Aorta (tissue), 5 donors: ENCODE measurements at regions of chr14 and their contacts with region 1.

Region 1: GRCh38 chr14:74793506-74794168 is 30.5 kb downstream of the YLPM1 start:
- DNase-seq: no peak
- ATAC-seq: no peak
- H3K4me3 ChIP-seq: no peak overlapping the region
- H3K27ac ChIP-seq: peak overlapping the region in 1 of 2 donors; percentile 76
- H3K4me1 ChIP-seq: peaks cover 0 to 2% of the 10 kb centered on the region in 2 donors
- H3K27me3 ChIP-seq: no peaks in the 10 kb centered on the region

Region 2: GRCh38 chr14:74493343-74494261 is 300.0 kb before region 1 on chr14 and contains the start of gene ISCA2:
- intact Hi-C with region 1: loop called in 1 of 2 experiments (anchors 10 kb)
- DNase-seq: peak; percentile 100
- ATAC-seq: peak; percentile 98
- H3K4me3 ChIP-seq: peak within 1 kb of the TSS; percentile 62 to 88
- H3K27ac ChIP-seq: peak within 1 kb of the TSS in 1 of 2 donors; percentile 69
- H3K4me1 ChIP-seq: peaks cover 4 to 5% of the 10 kb centered on the region in 2 donors
- H3K27me3 ChIP-seq: no peaks in the 10 kb centered on the region
- total RNA-seq, gene ISCA2: 12.9 to 15.9 TPM

Region 3: GRCh38 chr14:74667758-74668157 is 125.9 kb before region 1 on chr14:
- intact Hi-C with region 1: no loop called
- DNase-seq: no peak
- ATAC-seq: no peak
- H3K4me3 ChIP-seq: no peak overlapping the region
- H3K27ac ChIP-seq: peak overlapping the region in 1 of 2 donors; percentile 12
- H3K4me1 ChIP-seq: peaks cover 3 to 9% of the 10 kb centered on the region in 2 donors
- H3K27me3 ChIP-seq: no peaks in the 10 kb centered on the region